GM12878 (cell line): ENCODE measurements at regions of chr12 and their contacts with region 1.

Region 1: GRCh38 chr12:75738486-75738885 is 227.1 kb upstream of the KRR1 start:
- DNase-seq: peak; percentile 16
- ATAC-seq: peak; percentile 96
- H3K4me3 ChIP-seq: no peak overlapping the region
- H3K27ac ChIP-seq: no peak overlapping the region
- H3K4me1 ChIP-seq: no peaks in the 10 kb centered on the region
- H3K27me3 ChIP-seq: no peaks in the 10 kb centered on the region
- CTCF ChIP-seq: no peak
- EP300 ChIP-seq: 0 out of 4 replicates have a peak, but pooled peaks have one; percentile 13 to 36
- POLR2A ChIP-seq: no peak
- RAD21 ChIP-seq: no peak

Region 2: GRCh38 chr12:75759842-75760572 is 21.5 kb after region 1 on chr12:
- CTCF ChIA-PET with region 1: no interaction called
- POLR2A ChIA-PET with region 1: no interaction called
- RAD21 ChIA-PET with region 1: interaction called, 3 read pairs
- SMC1A ChIA-PET with region 1: interaction called, 13 read pairs
- in situ Hi-C with region 1: no loop called
- intact Hi-C with region 1: no loop called
- DNase-seq: no peak
- ATAC-seq: peak; percentile 76
- H3K4me3 ChIP-seq: no peak overlapping the region
- H3K27ac ChIP-seq: no peak overlapping the region
- H3K4me1 ChIP-seq: no peaks in the 10 kb centered on the region
- H3K27me3 ChIP-seq: no peaks in the 10 kb centered on the region
- CTCF ChIP-seq: no peak
- EP300 ChIP-seq: no peak
- POLR2A ChIP-seq: no peak
- RAD21 ChIP-seq: no peak

Region 3: DNA sequence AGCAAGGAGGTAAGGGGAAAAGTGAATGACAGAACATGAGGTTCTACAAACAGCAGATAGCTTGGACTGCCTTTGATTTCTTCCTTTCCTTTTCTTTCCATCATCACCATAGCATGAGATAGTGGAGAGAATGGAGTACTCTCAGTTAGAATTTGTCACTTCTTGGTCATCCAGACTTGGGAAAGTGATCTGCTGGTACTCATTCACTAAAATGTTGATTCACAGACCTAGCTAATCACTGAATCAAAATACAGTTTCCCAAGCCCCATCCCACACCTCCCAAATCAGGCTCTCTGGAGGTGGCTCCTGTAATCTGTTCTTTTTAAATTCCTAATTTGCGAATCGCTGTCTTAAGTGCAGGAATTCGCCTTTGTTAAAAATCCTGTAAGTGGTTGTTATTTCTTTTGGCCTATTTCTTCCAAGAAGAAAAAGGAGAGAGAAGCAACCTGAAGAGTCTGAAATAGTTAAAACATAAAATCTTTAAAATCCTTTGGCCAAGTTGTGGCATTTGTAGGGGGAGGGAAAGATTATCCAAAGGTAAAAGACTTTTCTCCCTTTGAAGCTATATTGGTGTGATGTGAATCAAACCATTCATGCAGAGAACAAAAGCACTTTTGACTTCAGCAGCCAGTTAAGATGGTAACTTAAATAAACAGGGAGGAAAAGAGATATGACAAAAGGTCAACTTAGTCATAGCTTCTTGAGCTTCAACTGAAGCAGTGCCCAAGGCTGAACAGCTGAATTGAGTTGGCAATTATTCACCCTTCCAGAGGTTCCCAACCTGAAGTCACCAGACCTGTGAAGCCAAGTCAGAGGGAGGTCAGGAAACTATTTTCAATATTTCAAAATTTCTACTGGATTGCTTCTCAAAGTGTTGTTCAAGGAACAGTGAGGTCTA is 28.0 kb after region 1 on chr12:
- CTCF ChIA-PET with region 1: interaction called, 3 read pairs
- POLR2A ChIA-PET with region 1: no interaction called
- RAD21 ChIA-PET with region 1: no interaction called
- SMC1A ChIA-PET with region 1: interaction called, 13 read pairs
- in situ Hi-C with region 1: no loop called
- intact Hi-C with region 1: no loop called
- DNase-seq: no peak
- ATAC-seq: no peak
- H3K4me3 ChIP-seq: no peak overlapping the region
- H3K27ac ChIP-seq: no peak overlapping the region
- H3K4me1 ChIP-seq: no peaks in the 10 kb centered on the region
- H3K27me3 ChIP-seq: no peaks in the 10 kb centered on the region
- CTCF ChIP-seq: no peak
- EP300 ChIP-seq: no peak
- POLR2A ChIP-seq: no peak
- RAD21 ChIP-seq: no peak